Activated CD4-positive, alpha-beta T cell treated with anti-CD3 and anti-CD28 coated beads for 36 hours (primary cell): ENCODE measurements at regions of chr5 and their contacts with region 1.

Region 1: DNA sequence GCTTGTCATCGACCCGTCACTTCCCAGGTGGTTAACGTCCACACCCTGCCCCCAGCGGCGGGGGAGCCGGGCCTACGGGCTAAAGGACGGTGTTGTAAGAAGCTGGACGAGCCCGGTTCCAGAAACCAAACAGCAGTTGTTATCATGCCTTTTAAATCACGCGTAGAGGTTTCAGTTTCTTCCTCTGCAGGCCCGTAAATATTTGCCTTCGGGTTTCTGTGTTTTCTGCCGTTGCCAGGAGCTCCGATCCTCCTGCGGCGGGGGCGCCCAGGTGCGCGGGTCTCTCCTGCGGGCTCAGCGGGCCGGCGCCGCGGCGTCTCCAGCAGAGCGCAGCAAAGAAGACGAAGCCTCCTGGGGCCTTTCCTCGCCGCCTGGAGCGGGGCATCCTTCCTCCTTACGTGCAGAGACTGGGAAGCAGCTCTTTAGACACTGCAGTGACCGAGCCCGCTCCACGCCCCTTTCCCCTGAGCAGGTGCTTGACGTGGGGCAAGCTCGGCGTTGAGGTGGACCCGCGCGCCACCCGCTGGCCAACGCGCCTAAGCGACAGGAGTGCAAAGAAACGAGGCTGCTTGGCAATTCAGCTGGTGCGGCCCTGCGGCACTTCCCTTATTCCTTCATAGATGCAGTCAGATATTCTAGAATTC is 21.8 kb upstream of the TTC1 start:
- DNase-seq: peak; percentile 85
- ATAC-seq: peak; percentile 97
- H3K4me3 Mint-ChIP-seq: peak overlapping the region; percentile 21
- H3K27ac Mint-ChIP-seq: no peak overlapping the region
- H3K4me1 Mint-ChIP-seq: peaks cover 2% of the 10 kb centered on the region
- H3K27me3 Mint-ChIP-seq: peaks cover 24% of the 10 kb centered on the region

Region 2: DNA sequence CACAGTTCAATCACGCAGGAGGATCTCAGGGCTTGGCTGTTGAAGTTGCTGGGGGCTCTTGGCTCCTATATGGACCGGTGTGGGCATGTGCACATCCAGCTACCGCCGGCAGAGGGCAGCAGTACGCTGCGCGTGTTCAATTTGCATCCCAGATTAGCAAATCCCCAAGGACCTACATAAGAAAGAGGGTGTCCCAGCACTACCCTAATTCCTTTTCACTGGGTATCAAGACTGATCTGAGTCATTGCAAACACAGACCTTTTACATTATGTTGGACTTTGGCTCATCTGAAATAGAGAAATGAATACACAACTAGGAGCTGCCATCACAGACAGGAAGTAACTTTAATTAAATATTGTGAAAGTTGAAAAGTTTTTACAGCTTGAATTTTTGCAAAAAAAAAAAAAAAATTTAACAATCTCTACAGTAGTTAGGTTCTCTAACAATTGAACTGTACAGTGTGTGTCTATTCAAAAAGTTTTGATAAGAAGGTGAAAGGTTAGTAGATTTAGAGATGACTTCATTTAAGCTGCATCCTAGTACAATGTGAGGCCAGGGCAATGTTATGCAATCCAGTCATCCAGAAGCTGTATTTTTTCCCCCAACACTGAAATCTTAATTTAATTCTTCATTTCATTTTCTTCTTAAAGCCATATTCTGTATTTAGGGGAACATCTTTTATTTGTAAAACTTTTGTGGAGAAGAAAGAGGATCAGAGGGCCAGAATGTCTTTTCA is 1291.4 kb before region 1 on chr5:
- CTCF ChIA-PET with region 1: no interaction called
- POLR2A ChIA-PET with region 1: no interaction called
- intact Hi-C with region 1: loop called in 1 of 2 experiments (anchors 5 kb)
- DNase-seq: peak; percentile 80
- ATAC-seq: peak; percentile 74
- H3K4me3 Mint-ChIP-seq: no peak overlapping the region
- H3K27ac Mint-ChIP-seq: no peak overlapping the region
- H3K4me1 Mint-ChIP-seq: peaks cover 2% of the 10 kb centered on the region
- H3K27me3 Mint-ChIP-seq: no peaks in the 10 kb centered on the region

Region 3: DNA sequence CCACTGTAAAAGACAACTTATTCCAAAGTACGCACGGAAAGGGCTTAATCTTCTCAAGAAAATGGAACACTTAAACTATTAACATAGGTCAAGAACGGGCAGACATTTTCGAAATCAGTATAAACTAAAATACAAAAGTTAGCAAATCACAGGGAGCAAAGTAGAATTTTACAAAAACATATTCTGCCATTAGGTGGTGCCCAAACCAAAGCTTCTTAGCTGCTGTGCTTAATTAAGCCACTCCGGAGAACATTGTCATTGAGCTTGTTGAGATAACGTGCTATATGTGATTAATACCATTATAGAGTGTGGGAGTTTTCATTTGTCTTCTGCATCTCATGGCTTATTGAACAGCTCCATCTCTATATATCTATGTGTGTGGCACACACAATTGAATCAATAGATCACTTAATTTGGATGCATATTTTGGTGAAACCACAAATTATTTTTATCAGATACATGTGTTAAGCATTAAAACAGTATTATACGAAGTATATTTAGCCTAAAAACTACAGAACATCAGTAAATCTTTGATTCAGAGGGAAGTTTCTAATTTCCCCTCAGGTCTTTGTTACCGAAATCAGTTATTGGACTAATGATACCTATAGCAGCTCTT is 700.6 kb before region 1 on chr5:
- CTCF ChIA-PET with region 1: interaction called, 4 read pairs
- POLR2A ChIA-PET with region 1: no interaction called
- intact Hi-C with region 1: loop called in 1 of 2 experiments (anchors 2 kb)
- DNase-seq: no peak
- ATAC-seq: peak; percentile 63
- H3K4me3 Mint-ChIP-seq: no peak overlapping the region
- H3K27ac Mint-ChIP-seq: no peak overlapping the region
- H3K4me1 Mint-ChIP-seq: no peaks in the 10 kb centered on the region
- H3K27me3 Mint-ChIP-seq: no peaks in the 10 kb centered on the region

Region 4: GRCh38 chr5:159331093-159331973 is 655.8 kb before region 1 on chr5:
- CTCF ChIA-PET with region 1: no interaction called
- POLR2A ChIA-PET with region 1: no interaction called
- intact Hi-C with region 1: loop called in 1 of 2 experiments (anchors 2 kb)
- DNase-seq: peak; percentile 86
- ATAC-seq: peak; percentile 96
- H3K4me3 Mint-ChIP-seq: peak overlapping the region; percentile 62
- H3K27ac Mint-ChIP-seq: peak overlapping the region; percentile 76
- H3K4me1 Mint-ChIP-seq: peaks cover 15% of the 10 kb centered on the region
- H3K27me3 Mint-ChIP-seq: peaks cover 2% of the 10 kb centered on the region

Region 5: GRCh38 chr5:159444441-159445082 is 542.6 kb before region 1 on chr5:
- CTCF ChIA-PET with region 1: interaction called, 12 read pairs
- POLR2A ChIA-PET with region 1: no interaction called
- intact Hi-C with region 1: loop called (anchors 1 kb)
- DNase-seq: no peak
- ATAC-seq: peak; percentile 58
- H3K4me3 Mint-ChIP-seq: no peak overlapping the region
- H3K27ac Mint-ChIP-seq: no peak overlapping the region
- H3K4me1 Mint-ChIP-seq: no peaks in the 10 kb centered on the region
- H3K27me3 Mint-ChIP-seq: peaks cover 15% of the 10 kb centered on the region

Region 6: DNA sequence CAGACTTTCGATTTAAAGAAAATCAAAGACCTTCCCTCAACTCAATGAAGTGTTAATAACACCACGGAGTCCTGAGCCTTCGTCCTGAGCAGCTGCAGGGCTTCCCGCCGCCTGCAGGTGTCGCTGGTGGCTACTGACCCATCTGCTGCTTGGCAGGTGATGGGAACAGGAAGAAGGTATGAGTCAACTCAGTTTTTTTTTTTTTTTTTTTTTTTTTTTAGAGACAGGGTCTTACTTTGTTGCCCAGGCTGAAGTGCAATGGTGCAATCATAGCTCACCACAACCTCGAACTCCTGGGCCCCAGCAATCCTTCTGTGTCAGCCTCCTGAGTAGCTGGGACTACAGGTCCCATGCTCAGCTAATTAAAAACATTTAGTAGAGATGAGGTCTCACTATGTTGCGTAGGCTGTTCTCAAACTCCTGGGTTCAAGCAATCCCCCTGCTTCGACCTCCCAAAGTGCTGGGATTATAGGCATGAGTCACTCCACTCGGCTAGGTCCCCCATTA is 471.2 kb before region 1 on chr5:
- CTCF ChIA-PET with region 1: interaction called, 15 read pairs
- POLR2A ChIA-PET with region 1: no interaction called
- intact Hi-C with region 1: loop called (anchors 1 to 5 kb)
- DNase-seq: peak; percentile 89
- ATAC-seq: peak; percentile 98
- H3K4me3 Mint-ChIP-seq: no peak overlapping the region
- H3K27ac Mint-ChIP-seq: no peak overlapping the region
- H3K4me1 Mint-ChIP-seq: peaks cover 9% of the 10 kb centered on the region
- H3K27me3 Mint-ChIP-seq: peaks cover 10% of the 10 kb centered on the region

Region 7: DNA sequence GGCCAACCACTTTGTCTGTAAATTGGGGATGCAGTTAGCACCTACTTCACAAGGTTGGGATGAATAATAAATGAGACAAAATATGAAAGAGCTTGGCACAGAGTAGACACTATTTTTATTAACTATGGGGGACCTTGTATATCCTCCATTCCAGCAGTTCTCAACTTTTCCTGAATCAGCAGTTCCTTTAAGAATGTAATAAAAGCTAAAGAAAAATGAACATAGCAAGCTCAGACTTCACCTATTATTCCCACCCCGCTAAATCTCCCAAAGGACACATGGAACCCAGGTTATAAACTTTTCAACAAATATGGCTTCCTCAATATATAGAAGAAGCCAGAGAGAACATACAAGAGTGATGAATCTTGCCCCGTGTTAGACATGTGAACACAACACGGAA is 10.2 kb before region 1 on chr5:
- CTCF ChIA-PET with region 1: interaction called, 12 read pairs
- POLR2A ChIA-PET with region 1: interaction called, 3 read pairs
- intact Hi-C with region 1: no loop called
- DNase-seq: no peak
- ATAC-seq: no peak
- H3K4me3 Mint-ChIP-seq: no peak overlapping the region
- H3K27ac Mint-ChIP-seq: no peak overlapping the region
- H3K4me1 Mint-ChIP-seq: peaks cover 6% of the 10 kb centered on the region
- H3K27me3 Mint-ChIP-seq: peaks cover 34% of the 10 kb centered on the region